Activated T-helper 1 cell treated with anti-CD3 and anti-CD28 coated beads, Interleukin-12 subunit alpha, Interleukin-12 subunit beta, Interleukin-2, Interleukin-4 antibody, amounts not matched to agents 30 ng/mL and 10 ng/mL and 1 ng/mL, durations not matched to agents 14 hours and 24 hours and 36 hours (primary cell): ENCODE measurements at regions of chr15 and their contacts with region 1.

Region 1: GRCh38 chr15:40382580-40383456 is at the start of gene KNSTRN:
- DNase-seq: peak; percentile 87
- H3K4me3 Mint-ChIP-seq: peak within 1 kb of the TSS; percentile 96
- H3K27ac Mint-ChIP-seq: peak within 1 kb of the TSS; percentile 87
- H3K4me1 Mint-ChIP-seq: peaks cover 29% of the 10 kb centered on the region
- H3K27me3 Mint-ChIP-seq: peaks cover 7% of the 10 kb centered on the region
- total RNA-seq, gene KNSTRN: 48.4 and 52.1 TPM in 2 replicates

Region 2: GRCh38 chr15:40307421-40308211 is 75.2 kb before region 1 on chr15 and contains the start of gene PLCB2:
- intact Hi-C with region 1: loop called (anchors 1 kb)
- DNase-seq: peak; percentile 62
- H3K4me3 Mint-ChIP-seq: peak within 1 kb of the TSS; percentile 92
- H3K27ac Mint-ChIP-seq: peak within 1 kb of the TSS; percentile 98
- H3K4me1 Mint-ChIP-seq: peaks cover 37% of the 10 kb centered on the region
- H3K27me3 Mint-ChIP-seq: peaks cover 16% of the 10 kb centered on the region
- total RNA-seq, gene PLCB2: 88.5 and 89.0 TPM in 2 replicates

Region 3: DNA sequence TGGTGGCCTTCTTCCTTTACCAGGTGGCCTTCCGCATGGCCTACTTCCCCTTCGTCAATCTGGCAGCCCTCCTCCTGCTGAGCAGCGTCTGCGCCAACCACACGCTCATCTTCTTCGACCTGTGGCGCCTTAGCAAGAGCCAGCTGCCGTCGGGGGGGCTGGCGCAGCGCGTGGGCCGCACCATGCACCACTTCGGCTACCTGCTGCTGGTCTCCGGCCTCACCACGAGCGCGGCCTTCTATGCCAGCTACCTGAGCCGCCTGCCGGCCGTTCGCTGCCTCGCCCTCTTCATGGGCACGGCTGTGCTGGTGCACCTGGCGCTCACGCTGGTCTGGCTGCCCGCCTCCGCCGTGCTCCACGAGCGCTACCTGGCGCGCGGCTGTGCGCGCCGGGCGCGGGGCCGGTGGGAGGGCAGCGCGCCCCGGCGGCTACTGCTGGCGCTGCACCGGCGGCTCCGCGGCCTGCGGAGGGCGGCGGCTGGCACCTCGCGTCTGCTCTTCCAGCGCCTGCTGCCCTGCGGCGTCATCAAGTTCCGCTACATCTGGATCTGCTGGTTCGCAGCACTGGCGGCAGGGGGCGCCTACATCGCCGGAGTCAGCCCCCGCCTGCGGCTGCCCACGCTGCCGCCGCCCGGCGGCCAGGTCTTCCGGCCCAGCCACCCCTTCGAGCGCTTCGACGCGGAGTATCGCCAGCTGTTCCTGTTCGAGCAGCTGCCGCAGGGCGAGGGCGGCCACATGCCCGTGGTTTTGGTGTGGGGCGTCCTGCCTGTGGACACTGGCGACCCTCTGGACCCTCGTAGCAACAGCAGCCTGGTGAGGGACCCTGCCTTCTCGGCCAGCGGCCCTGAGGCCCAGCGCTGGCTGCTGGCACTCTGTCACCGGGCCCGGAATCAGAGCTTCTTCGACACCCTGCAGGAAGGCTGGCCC is 14.9 kb before region 1 on chr15:
- intact Hi-C with region 1: loop called (anchors 1 kb)
- DNase-seq: peak; percentile 83
- H3K4me3 Mint-ChIP-seq: peak overlapping the region; percentile 75
- H3K27ac Mint-ChIP-seq: no peak overlapping the region
- H3K4me1 Mint-ChIP-seq: peaks cover 11% of the 10 kb centered on the region
- H3K27me3 Mint-ChIP-seq: peaks cover 12% of the 10 kb centered on the region

Region 4: GRCh38 chr15:40421246-40422157 is 38.7 kb after region 1 on chr15:
- intact Hi-C with region 1: loop called (anchors 5 kb)
- DNase-seq: peak; percentile 72
- H3K4me3 Mint-ChIP-seq: no peak overlapping the region
- H3K27ac Mint-ChIP-seq: no peak overlapping the region
- H3K4me1 Mint-ChIP-seq: no peaks in the 10 kb centered on the region
- H3K27me3 Mint-ChIP-seq: no peaks in the 10 kb centered on the region

Region 5: DNA sequence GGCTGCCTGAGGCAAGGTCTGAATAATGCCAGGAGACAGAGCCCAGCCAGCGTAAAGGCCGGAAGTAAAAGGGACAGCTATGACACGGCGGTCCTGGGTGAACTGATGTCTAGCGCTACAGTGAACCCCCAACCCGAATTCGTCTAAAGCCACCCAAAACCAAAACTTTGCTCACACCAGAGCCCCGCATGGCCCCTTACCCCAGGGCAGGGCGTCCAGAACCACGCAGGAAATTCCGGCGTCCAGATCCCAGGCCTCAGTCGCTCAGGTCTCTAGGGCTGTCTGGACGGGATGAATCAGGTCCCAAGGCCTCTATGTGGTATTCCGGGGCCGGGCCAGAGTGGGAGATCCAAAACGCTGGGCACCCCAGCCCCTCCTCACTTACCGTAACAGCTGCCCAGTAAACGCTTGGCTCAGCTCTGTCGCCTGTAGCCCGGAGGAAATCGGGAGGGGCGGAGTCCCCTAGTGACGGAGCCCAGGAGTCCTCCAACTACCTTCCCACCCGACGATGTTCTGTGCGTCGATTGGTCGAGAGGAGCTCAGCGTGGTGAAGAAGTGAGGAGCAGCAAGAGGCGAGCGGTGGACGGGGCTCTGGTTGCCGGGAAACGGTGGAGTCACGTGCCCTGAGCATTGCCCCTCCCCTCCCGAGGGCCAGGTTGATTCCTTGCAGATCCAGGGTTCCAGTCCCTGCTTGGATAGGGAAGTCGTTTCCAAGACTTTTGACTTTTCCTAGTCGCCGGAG is 181.9 kb after region 1 on chr15 and contains the start of gene CCDC32:
- intact Hi-C with region 1: loop called (anchors 2 kb)
- DNase-seq: peak; percentile 96
- H3K4me3 Mint-ChIP-seq: peak within 1 kb of the TSS; percentile 96
- H3K27ac Mint-ChIP-seq: peak within 1 kb of the TSS; percentile 96
- H3K4me1 Mint-ChIP-seq: peaks cover 43% of the 10 kb centered on the region
- H3K27me3 Mint-ChIP-seq: no peaks in the 10 kb centered on the region
- total RNA-seq, gene CCDC32: 28.4 and 36.9 TPM in 2 replicates